ENCODE measurements at regions of chr9 and their contacts with region 1.

Region 1: GRCh38 chr9:127828262-127829031 is 25.8 kb downstream of the FPGS start:
- DNase-seq: peak; percentile 62 to 87
- ATAC-seq: peak; percentile 68 to 79
- H3K4me3 ChIP-seq: peak overlapping the region; percentile 32
- H3K27ac ChIP-seq: peak overlapping the region; percentile 66 to 77
- H3K4me1 ChIP-seq: peaks cover 9% of the 10 kb centered on the region
- CTCF ChIP-seq: no peak
- EP300 ChIP-seq: no peak
- POLR2A ChIP-seq: peak; percentile 24; the same call in 1 of the 2 replicates
- RAD21 ChIP-seq: no peak

Region 2: GRCh38 chr9:127715394-127716337 is 112.8 kb before region 1 on chr9 and contains the starts of genes PTRH1 and TTC16:
- CTCF ChIA-PET with region 1: no interaction called
- POLR2A ChIA-PET with region 1: no interaction called
- DNase-seq: peak; percentile 96 to 97
- ATAC-seq: peak; percentile 92 to 95
- H3K4me3 ChIP-seq: peak within 1 kb of the TSS; percentile 68
- H3K27ac ChIP-seq: peak within 1 kb of the TSS; percentile 73 to 79
- H3K4me1 ChIP-seq: peaks cover 17% of the 10 kb centered on the region
- CTCF ChIP-seq: no peak
- EP300 ChIP-seq: no peak
- POLR2A ChIP-seq: no peak; the same call in 1 of the 2 replicates
- RAD21 ChIP-seq: no peak
- polyA plus RNA-seq, gene PTRH1: 3.5 and 5.1 TPM in 2 replicates
- polyA plus RNA-seq, gene TTC16: 0.03 TPM in 1 of 2 replicates, not detected in the other

Region 3: DNA sequence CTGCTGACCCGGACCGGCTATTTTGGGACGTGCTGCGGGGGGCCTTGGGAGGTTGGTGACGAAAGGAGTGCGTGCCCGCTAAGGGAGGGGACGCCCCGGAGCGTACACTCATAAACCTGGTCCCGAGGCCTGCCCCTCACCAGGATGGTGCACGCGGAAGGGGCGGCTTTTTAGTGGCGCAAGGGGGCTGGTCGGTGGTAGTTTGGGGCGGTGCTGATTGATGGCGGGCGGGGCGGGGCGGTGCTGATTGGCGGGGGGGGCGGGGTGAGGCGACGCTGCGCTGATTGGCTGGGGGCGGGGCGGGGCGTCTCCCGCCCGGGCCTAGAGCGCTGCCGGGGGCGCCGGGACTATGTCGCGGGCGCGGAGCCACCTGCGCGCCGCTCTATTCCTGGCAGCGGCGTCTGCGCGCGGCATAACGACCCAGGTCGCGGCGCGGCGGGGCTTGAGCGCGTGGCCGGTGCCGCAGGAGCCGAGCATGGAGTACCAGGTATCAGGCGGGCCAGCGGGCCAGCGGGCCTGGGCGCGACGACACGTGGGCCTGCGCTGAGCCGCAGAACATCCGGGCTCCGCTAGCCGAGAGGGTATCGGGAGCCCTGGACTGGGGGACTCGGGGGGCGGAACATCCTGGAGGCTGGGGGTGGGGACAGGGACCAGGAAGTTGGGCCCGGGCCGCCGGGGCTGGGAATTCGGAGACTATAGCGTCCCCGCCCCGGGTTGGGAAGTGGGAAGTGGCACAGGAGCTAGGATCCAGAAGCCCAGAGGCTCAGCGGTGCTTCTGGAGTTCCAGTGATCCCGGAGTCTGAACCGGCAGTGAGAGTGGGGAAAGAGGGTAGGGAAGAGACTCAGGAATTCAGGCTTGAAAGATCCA is 25.6 kb before region 1 on chr9 and contains the start of gene FPGS:
- CTCF ChIA-PET with region 1: interaction called, 23 read pairs
- POLR2A ChIA-PET with region 1: interaction called, 3 read pairs
- DNase-seq: peak; percentile 91 to 95
- ATAC-seq: peak; percentile 86 to 90
- H3K4me3 ChIP-seq: peak within 1 kb of the TSS; percentile 85
- H3K27ac ChIP-seq: peak within 1 kb of the TSS; percentile 93 to 96
- H3K4me1 ChIP-seq: peaks cover 38% of the 10 kb centered on the region
- CTCF ChIP-seq: 0 out of 3 replicates have a peak, but pooled peaks have one; percentile 3
- EP300 ChIP-seq: no peak
- POLR2A ChIP-seq: peak; percentile 62
- RAD21 ChIP-seq: 0 out of 5 replicates have a peak, but pooled peaks of 1 of the 2 experiments have one; percentile 12
- polyA plus RNA-seq, gene FPGS: 28.8 and 33.4 TPM in 2 replicates

Region 4: DNA sequence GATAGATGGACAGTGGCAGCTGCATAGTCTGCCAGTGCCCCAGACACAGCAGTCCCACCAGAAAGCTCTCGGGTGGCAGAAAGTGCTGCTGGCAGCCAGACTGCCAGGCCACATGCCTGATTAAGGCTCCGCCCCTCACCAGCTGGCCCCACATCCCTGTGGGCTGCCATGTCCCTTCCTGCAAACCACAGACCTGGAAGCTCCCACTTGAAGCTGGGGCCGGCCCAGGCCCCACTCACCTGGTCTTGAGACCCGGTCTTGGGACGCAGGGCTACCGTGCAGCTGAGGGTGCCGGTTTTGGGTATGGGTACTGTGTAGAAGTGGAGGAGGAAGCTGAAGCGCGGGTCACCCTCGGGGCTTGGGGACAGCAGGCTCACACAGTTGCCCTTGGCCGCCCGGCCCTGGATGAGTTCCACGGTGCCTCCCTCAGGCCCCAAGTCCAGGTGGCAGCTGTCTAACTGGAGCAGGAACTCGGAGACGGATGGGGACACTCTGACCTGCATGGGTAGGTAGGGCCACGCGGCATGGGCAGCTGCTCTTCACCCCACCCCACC is 10.5 kb before region 1 on chr9:
- CTCF ChIA-PET with region 1: interaction called, 17 read pairs
- POLR2A ChIA-PET with region 1: no interaction called
- DNase-seq: no peak
- ATAC-seq: peak; percentile 9 to 24; a peak in 4 of 6 replicates
- H3K4me3 ChIP-seq: no peak overlapping the region
- H3K27ac ChIP-seq: no peak overlapping the region
- H3K4me1 ChIP-seq: no peaks in the 10 kb centered on the region
- CTCF ChIP-seq: no peak
- EP300 ChIP-seq: no peak
- POLR2A ChIP-seq: no peak
- RAD21 ChIP-seq: no peak

Region 5: DNA sequence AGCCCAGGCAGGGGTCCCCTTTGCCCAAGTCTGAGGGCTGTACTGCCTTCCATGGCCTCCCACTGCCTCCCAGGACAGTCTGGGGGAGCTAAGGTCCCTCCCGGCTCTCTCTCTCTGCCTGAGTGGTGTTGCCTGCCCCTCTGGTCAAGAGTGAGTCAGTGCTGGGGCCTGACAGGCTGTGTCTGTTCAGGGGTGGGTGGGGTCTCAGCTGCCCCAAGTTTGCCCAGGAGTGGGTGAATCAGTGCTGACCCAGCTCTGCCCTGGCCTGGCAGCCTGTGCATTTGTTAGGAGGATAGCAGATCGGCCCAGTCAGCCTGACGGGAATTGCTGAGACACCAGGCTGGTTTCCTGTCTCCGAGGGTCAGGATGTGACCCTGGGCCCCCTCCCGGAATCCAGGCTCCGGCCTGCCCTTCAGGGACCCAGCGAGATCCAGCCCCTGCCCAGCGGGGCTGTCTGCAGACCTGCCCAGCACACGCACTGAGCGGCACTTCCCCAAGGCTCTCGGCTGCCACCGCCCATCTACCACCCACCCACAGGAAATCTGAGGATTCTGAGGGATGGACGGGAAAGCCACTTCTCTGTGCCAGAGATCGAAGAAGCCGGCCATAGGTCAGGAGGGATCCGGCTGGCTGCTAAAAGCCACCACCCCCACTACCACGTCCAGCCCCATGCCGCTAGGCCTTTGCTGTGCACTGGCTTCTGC is 10.1 kb after region 1 on chr9:
- CTCF ChIA-PET with region 1: interaction called, 10 read pairs
- POLR2A ChIA-PET with region 1: interaction called, 3 read pairs
- DNase-seq: peak; percentile 26 to 51
- ATAC-seq: peak; percentile 72 to 92
- H3K4me3 ChIP-seq: no peak overlapping the region
- H3K27ac ChIP-seq: peak overlapping the region; percentile 33 to 68; a peak in 4 of 6 replicates
- H3K4me1 ChIP-seq: peaks cover 12% of the 10 kb centered on the region; the same call in 2 of the 3 replicates
- CTCF ChIP-seq: no peak
- EP300 ChIP-seq: no peak
- POLR2A ChIP-seq: no peak
- RAD21 ChIP-seq: no peak